Activated CD4-positive, alpha-beta T cell treated with anti-CD3 and anti-CD28 coated beads for 36 hours (primary cell): ENCODE measurements at regions of chr10 and their contacts with region 1.

Region 1: DNA sequence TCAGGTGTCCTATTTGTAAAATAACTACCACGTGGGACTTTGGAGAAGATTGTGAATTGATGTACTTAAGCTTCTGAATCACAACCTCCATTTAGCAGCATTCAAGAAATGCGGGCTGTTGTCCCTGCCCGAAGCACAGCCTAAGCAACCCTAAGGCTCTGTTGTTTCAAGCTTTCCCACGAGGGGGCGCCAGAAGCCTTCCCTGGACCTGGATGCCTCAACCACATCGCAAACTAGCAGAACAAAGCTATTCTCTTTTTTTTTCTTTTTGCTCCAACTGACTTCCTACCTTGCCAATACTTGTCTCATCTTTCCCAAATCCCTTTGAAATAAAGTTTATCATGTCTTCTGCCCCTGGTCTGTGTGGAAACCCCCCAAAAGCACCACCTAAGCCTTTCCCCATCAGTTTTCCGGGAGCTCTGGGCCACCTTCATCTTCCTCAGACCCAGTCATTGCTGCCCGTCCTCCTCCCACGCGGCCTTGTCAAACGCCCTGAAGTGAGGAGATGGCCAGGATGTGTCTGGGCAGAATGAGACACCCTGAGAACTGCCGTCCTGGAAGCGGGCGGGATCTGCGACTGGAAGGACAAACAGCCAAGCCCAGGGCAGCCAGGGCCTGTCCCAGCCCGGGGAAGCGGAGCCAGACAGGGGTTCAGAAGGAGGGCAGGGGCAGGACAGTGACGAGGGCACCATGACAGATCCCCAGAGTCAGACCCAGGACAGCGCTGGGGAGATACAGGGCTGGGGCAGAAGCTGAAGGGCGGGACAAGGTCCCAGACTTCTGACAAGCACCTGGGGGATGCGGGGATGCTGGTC is 112.7 kb downstream of the SLIT1 start:
- DNase-seq: peak; percentile 92
- ATAC-seq: peak; percentile 75
- H3K4me3 Mint-ChIP-seq: no peak overlapping the region
- H3K27ac Mint-ChIP-seq: no peak overlapping the region
- H3K4me1 Mint-ChIP-seq: peaks cover 11% of the 10 kb centered on the region
- H3K27me3 Mint-ChIP-seq: peaks cover 18% of the 10 kb centered on the region

Region 2: DNA sequence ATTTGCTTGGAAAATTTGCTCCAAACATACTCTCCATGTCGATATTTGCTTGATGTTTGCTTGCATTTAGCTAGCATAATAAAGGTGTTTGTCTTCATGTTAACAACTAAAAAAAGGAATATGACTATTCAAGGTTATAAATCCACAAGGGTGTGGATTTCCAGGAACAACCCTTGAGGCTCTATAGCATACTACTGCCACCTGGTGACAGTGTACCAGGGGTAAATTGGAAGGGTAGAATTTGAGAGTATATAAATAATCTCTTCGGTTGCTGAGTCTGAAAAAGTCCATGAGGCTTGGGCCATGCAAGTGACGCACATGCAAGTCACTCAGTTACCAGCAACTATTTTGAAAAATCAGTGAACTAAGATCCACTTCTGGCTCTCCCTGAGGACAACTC is 44.3 kb after region 1 on chr10:
- CTCF ChIA-PET with region 1: interaction called, 11 read pairs
- POLR2A ChIA-PET with region 1: no interaction called
- intact Hi-C with region 1: loop called (anchors 1 kb)
- DNase-seq: no peak
- ATAC-seq: no peak
- H3K4me3 Mint-ChIP-seq: no peak overlapping the region
- H3K27ac Mint-ChIP-seq: no peak overlapping the region
- H3K4me1 Mint-ChIP-seq: no peaks in the 10 kb centered on the region
- H3K27me3 Mint-ChIP-seq: peaks cover 2% of the 10 kb centered on the region

Region 3: GRCh38 chr10:97196223-97197029 is 123.4 kb after region 1 on chr10:
- CTCF ChIA-PET with region 1: interaction called, 32 read pairs
- POLR2A ChIA-PET with region 1: interaction called, 4 read pairs
- intact Hi-C with region 1: loop called in 1 of 2 experiments (anchors 1 kb)
- DNase-seq: peak; percentile 77
- ATAC-seq: peak; percentile 93
- H3K4me3 Mint-ChIP-seq: peak overlapping the region; percentile 62
- H3K27ac Mint-ChIP-seq: no peak overlapping the region
- H3K4me1 Mint-ChIP-seq: peaks cover 4% of the 10 kb centered on the region
- H3K27me3 Mint-ChIP-seq: peaks cover 11% of the 10 kb centered on the region

Region 4: GRCh38 chr10:97210543-97210961 is 137.5 kb after region 1 on chr10:
- CTCF ChIA-PET with region 1: interaction called, 169 read pairs
- POLR2A ChIA-PET with region 1: interaction called, 3 read pairs
- intact Hi-C with region 1: loop called (anchors 1 kb)
- DNase-seq: peak; percentile 82
- ATAC-seq: peak; percentile 77
- H3K4me3 Mint-ChIP-seq: no peak overlapping the region
- H3K27ac Mint-ChIP-seq: no peak overlapping the region
- H3K4me1 Mint-ChIP-seq: no peaks in the 10 kb centered on the region
- H3K27me3 Mint-ChIP-seq: no peaks in the 10 kb centered on the region

Region 5: GRCh38 chr10:97234400-97234799 is 161.3 kb after region 1 on chr10:
- CTCF ChIA-PET with region 1: interaction called, 33 read pairs
- POLR2A ChIA-PET with region 1: no interaction called
- intact Hi-C with region 1: loop called (anchors 1 to 2 kb)
- DNase-seq: no peak
- ATAC-seq: no peak
- H3K4me3 Mint-ChIP-seq: no peak overlapping the region
- H3K27ac Mint-ChIP-seq: no peak overlapping the region
- H3K4me1 Mint-ChIP-seq: peaks cover 17% of the 10 kb centered on the region
- H3K27me3 Mint-ChIP-seq: no peaks in the 10 kb centered on the region

Region 6: GRCh38 chr10:97355571-97355975 is 282.5 kb after region 1 on chr10:
- CTCF ChIA-PET with region 1: interaction called, 3 read pairs
- POLR2A ChIA-PET with region 1: no interaction called
- intact Hi-C with region 1: loop called in 1 of 2 experiments (anchors 10 kb)
- DNase-seq: no peak
- ATAC-seq: no peak
- H3K4me3 Mint-ChIP-seq: no peak overlapping the region
- H3K27ac Mint-ChIP-seq: no peak overlapping the region
- H3K4me1 Mint-ChIP-seq: no peaks in the 10 kb centered on the region
- H3K27me3 Mint-ChIP-seq: no peaks in the 10 kb centered on the region

Region 7: DNA sequence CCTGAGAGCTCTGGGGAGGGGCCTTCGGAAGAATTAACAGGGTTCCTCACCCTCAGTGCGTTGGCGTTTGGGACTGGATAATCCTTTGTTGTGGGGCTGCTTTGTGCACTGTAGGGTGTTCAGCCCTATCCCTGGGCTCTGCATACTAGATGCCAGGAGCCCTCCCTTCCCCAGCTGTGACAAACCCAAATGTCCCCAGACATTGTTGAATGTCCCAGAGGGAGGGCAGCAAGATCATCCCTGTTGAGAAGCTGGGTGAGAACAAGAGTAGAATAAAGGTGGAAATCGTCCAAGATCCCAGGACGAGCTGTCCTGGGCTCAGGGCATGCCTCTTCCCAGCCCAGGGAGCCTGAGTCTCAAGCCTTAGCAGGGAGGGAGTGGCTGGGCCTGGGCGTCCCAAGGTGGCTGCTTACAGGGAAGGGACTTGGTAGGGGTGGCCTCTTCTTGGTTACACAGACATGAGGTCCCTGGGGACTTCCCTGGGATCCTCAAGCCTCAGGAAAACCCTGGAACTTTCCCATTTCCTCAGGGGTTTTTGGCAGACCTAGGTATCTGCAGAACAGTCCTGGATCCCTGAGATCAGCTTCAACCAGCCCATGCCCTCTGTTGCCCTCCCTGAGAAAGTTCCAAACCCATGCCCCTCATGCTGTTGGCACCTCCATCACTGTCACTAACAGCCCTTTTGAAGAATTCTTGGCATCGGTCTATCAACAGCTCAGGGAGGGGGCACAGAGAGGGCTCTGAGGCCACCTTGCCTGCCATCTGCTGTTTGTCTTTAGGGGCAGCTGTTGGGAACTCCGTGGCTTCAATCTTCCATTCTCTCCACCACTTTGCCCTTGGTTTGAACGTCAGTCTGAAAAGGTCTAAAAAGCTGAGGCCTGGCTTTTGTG is 830.3 kb after region 1 on chr10:
- CTCF ChIA-PET with region 1: no interaction called
- POLR2A ChIA-PET with region 1: no interaction called
- intact Hi-C with region 1: no loop called
- DNase-seq: no peak
- ATAC-seq: no peak
- H3K4me3 Mint-ChIP-seq: no peak overlapping the region
- H3K27ac Mint-ChIP-seq: no peak overlapping the region
- H3K4me1 Mint-ChIP-seq: no peaks in the 10 kb centered on the region
- H3K27me3 Mint-ChIP-seq: peaks cover 10% of the 10 kb centered on the region

Region 8: GRCh38 chr10:98528166-98528804 is 1455.2 kb after region 1 on chr10:
- CTCF ChIA-PET with region 1: no interaction called
- POLR2A ChIA-PET with region 1: no interaction called
- intact Hi-C with region 1: no loop called
- DNase-seq: no peak
- ATAC-seq: no peak
- H3K4me3 Mint-ChIP-seq: no peak overlapping the region
- H3K27ac Mint-ChIP-seq: no peak overlapping the region
- H3K4me1 Mint-ChIP-seq: no peaks in the 10 kb centered on the region
- H3K27me3 Mint-ChIP-seq: peaks cover 6% of the 10 kb centered on the region